PC-3 (cell line): ENCODE measurements at regions of chr14 and their contacts with region 1.

Region 1: DNA sequence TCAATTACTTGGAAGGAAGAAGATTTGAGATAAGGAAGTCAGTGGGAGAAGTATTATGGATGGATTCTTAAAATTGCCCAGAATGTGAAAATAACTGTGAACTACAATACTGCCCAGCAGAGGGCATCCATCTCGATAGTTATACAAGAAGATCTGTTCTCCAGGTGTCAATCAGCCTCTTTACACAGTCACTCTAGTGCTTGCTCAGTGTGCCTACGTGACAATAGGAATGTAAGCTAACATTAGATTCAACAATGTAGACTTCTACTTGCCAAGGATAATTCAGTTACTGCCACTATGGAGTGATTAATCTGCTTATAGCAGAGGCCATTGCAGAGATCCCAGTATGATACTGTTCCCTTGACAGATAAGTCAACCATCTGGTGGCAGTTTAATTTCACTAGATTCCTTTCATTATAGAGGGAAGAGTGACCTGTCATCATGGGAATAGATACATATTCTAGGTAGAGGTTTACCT is 10.6 kb upstream of the MAP4K5 start:
- DNase-seq: peak; percentile 87
- ATAC-seq: peak; percentile 82
- H3K4me3 ChIP-seq: no peak overlapping the region
- H3K27ac ChIP-seq: no peak overlapping the region
- H3K4me1 ChIP-seq: peaks cover 16% of the 10 kb centered on the region
- H3K27me3 ChIP-seq: no peaks in the 10 kb centered on the region
- CTCF ChIP-seq: peak; percentile 91

Region 2: GRCh38 chr14:50559990-50560930 is 17.3 kb after region 1 on chr14 and contains the start of gene ATL1:
- CTCF ChIA-PET with region 1: interaction called, 4 read pairs
- POLR2A ChIA-PET with region 1: no interaction called
- intact Hi-C with region 1: loop called (anchors 1 kb)
- DNase-seq: peak; percentile 68
- ATAC-seq: peak; percentile 90
- H3K4me3 ChIP-seq: peak within 1 kb of the TSS; percentile 78
- H3K27ac ChIP-seq: no peak within 1 kb of the TSS
- H3K4me1 ChIP-seq: peaks cover 10% of the 10 kb centered on the region
- H3K27me3 ChIP-seq: peaks cover 29% of the 10 kb centered on the region
- CTCF ChIP-seq: no peak
- total RNA-seq, gene ATL1: 0.63 and 1.3 TPM in 2 replicates

Region 3: DNA sequence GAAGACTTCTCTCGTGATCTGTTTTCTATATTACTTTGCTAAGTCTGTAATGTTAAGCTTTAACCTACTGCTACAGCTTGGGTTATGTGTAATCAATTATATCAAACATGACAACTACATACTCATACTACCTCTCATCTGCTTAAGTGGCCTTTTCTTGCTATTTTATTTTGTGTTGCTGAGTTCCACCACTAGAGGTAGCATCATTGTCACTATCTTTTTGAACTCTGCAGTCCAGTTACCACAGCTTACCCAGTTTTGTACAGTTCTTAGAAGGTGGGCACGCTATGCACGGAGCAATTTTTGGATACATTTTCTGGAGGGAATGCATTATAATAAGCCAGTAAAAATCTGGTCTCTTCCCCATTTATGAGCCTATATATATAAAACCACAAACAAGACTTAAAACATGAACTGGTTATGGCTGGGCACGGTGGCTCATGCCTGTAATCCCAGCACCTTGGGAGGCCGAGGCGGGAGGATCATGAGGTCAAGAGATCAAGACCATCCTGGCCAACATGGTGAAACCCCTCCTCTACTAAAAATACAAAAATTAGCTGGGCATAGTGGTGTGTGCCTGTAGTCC is 76.7 kb after region 1 on chr14:
- CTCF ChIA-PET with region 1: interaction called, 4 read pairs
- POLR2A ChIA-PET with region 1: interaction called, 3 read pairs
- intact Hi-C with region 1: loop called (anchors 1 kb)
- DNase-seq: peak; percentile 72
- ATAC-seq: peak; percentile 93
- H3K4me3 ChIP-seq: no peak overlapping the region
- H3K27ac ChIP-seq: no peak overlapping the region
- H3K4me1 ChIP-seq: peaks cover 8% of the 10 kb centered on the region
- H3K27me3 ChIP-seq: no peaks in the 10 kb centered on the region
- CTCF ChIP-seq: peak; percentile 89

Region 4: DNA sequence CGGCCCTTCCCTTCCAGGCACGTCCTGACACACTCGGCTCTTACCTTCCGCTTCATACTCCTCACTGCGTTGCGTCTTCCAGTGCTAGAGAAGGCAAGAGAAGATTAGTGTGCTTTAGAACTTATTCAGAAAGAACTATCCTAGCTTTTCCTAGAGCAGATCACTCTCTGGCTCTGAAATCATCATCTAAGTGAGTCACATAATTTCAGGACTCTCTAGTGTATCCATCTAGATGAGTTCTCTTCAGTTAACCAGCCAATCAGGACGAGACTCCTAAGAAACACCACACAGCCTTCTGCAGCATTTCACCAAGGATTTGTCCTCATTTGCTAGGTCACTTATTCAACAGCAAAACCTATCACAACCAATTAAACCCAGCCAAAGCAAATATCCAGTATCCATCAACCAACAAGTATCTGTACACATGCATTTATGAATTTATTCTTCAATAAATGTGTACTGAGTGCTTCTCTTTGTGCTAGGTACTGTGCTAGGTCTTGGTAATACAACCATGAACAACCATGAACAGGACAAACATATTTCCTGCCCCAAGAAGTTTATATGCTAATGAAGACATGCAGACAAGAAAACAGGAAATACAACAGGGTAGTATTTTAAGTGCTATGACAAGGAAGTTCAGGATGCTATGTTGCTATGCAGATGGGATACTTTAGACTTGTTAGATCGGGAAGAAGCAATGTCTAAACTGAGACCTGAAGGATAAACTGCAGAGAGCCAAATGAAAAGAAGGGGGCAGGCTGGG is 235.9 kb after region 1 on chr14:
- CTCF ChIA-PET with region 1: interaction called, 10 read pairs
- POLR2A ChIA-PET with region 1: no interaction called
- intact Hi-C with region 1: loop called (anchors 1 kb)
- DNase-seq: no peak
- ATAC-seq: peak; percentile 6; the same call in 1 of the 2 replicates
- H3K4me3 ChIP-seq: no peak overlapping the region
- H3K27ac ChIP-seq: no peak overlapping the region
- H3K4me1 ChIP-seq: peaks cover 37% of the 10 kb centered on the region
- H3K27me3 ChIP-seq: no peaks in the 10 kb centered on the region
- CTCF ChIP-seq: no peak